Tibial artery (tissue), 4 donors: ENCODE measurements at regions of chr2 and their contacts with region 1.

Region 1: DNA sequence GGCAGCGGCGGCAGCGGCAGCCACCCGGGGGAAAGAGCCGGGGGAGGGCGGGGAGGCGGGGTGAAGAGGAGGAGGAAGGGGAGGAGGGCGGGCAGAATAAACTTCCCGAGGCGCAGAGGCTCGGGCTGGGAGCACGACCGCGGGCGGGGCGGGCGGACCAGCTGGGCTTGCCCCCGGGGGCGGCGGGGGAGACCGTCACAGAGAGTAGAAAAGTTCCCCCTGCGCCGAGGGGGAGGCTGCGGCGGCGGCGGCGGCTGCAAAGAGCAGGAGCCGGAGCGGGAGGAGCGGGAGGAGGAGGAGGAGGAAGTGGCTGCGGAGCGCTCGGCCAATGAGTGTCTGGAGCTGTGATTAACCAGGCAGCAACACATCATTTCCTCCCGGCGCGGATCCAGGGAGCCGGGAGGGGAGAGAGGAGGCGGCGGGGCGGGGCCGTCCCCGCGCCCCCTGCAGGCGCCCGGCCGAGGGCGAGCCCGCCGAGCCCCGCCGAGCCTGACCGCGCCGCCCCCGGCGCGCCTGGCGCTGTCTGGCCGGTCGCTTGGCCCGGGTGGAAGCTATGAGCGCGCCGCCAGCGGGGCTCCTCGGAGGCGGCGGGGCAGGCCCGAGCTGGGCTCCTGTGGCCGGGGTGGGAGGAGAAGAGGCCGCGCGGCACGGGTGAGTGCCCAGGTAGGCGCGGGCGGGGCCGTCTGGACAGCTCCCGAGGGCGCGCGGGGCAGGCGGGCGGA is at the start of gene ACVR1:
- DNase-seq: peak; percentile 98
- H3K4me3 ChIP-seq: peak within 1 kb of the TSS; percentile 81 to 94
- H3K27ac ChIP-seq: peak within 1 kb of the TSS; percentile 88 to 96
- H3K4me1 ChIP-seq: peaks cover 0 to 35% (median 22%) of the 10 kb centered on the region in 4 donors
- H3K27me3 ChIP-seq: no peaks in the 10 kb centered on the region
- CTCF ChIP-seq: peak in 1 of 2 experiments; percentile 70

Region 2: GRCh38 chr2:157789933-157790511 is 86.2 kb before region 1 on chr2:
- intact Hi-C with region 1: loop called (anchors 5 kb)
- DNase-seq: peak; percentile 46 to 84
- H3K4me3 ChIP-seq: no peak overlapping the region
- H3K27ac ChIP-seq: peak overlapping the region; percentile 63 to 65
- H3K4me1 ChIP-seq: peaks cover 0 to 71% (median 36%) of the 10 kb centered on the region in 4 donors
- H3K27me3 ChIP-seq: no peaks in the 10 kb centered on the region
- CTCF ChIP-seq: no peak

Region 3: GRCh38 chr2:157840568-157841156 is 35.6 kb before region 1 on chr2:
- intact Hi-C with region 1: loop called (anchors 5 kb)
- DNase-seq: peak; percentile 54 to 80
- H3K4me3 ChIP-seq: no peak overlapping the region
- H3K27ac ChIP-seq: peak overlapping the region; percentile 57 to 65
- H3K4me1 ChIP-seq: peaks cover 0 to 81% (median 55%) of the 10 kb centered on the region in 4 donors
- H3K27me3 ChIP-seq: no peaks in the 10 kb centered on the region
- CTCF ChIP-seq: peak; percentile 28 to 46

Region 4: GRCh38 chr2:157856187-157856515 is 20.1 kb before region 1 on chr2:
- intact Hi-C with region 1: no loop called
- DNase-seq: no peak
- H3K4me3 ChIP-seq: no peak overlapping the region
- H3K27ac ChIP-seq: no peak overlapping the region
- H3K4me1 ChIP-seq: peaks cover 0 to 12% (median 3%) of the 10 kb centered on the region in 4 donors
- H3K27me3 ChIP-seq: no peaks in the 10 kb centered on the region
- CTCF ChIP-seq: no peak